ENCODE measurements at regions of chr1 and their contacts with region 1.

Region 1: DNA sequence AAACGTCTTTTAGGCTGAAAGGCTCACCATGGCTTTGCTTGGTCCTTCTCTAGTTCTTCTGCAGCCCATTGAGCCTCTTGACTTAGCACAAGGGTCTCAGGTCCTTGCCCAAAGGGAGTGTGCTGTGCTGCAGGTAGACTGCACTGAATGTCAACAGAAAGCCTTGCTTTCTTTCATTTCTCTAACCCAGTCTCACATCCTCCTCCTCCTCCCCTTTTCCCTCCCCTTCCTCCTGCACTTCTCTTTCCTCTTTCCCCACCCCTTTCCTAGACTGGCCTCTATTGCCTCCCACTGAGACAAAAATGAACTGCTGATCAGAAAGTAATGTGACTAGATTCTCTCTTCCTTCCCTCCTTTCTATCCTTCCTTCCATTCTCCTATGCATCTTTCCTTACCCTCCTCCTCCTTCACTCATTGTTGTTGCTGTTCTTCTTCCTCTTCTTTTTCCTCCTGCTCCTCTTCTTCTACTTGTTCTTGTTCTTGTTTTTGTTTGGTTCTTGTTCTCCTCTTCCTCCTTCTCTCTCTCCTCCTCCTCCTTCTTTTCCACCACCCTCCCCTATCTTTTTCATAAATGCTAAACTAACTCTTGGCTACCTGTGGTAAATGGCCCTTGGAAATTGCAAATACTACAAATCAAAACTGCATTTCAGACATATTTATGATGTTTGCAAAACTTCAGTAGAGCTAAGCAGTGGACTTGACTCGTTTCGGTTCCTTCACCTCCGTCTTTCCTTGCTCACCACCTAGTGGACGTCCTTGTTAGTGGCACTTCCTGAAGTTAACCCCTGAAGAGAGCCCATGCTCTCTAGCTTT is at the start of gene SELL:
- DNase-seq: peak; percentile 21 to 23
- ATAC-seq: peak; percentile 70 to 83
- H3K4me3 ChIP-seq: peak within 1 kb of the TSS in 3 of 4 donors; percentile 22 to 49 (median 30)
- H3K27ac ChIP-seq: no peak within 1 kb of the TSS
- H3K4me1 ChIP-seq: no peaks in the 10 kb centered on the region
- H3K27me3 ChIP-seq: no peaks in the 10 kb centered on the region
- CTCF ChIP-seq: peak; percentile 18 to 68 (median 64)
- POLR2A ChIP-seq: no peak
- total RNA-seq, gene SELL: 0.24 to 0.72 (median 0.55) TPM in 3 of 4 donors, not detected in the other

Region 2: DNA sequence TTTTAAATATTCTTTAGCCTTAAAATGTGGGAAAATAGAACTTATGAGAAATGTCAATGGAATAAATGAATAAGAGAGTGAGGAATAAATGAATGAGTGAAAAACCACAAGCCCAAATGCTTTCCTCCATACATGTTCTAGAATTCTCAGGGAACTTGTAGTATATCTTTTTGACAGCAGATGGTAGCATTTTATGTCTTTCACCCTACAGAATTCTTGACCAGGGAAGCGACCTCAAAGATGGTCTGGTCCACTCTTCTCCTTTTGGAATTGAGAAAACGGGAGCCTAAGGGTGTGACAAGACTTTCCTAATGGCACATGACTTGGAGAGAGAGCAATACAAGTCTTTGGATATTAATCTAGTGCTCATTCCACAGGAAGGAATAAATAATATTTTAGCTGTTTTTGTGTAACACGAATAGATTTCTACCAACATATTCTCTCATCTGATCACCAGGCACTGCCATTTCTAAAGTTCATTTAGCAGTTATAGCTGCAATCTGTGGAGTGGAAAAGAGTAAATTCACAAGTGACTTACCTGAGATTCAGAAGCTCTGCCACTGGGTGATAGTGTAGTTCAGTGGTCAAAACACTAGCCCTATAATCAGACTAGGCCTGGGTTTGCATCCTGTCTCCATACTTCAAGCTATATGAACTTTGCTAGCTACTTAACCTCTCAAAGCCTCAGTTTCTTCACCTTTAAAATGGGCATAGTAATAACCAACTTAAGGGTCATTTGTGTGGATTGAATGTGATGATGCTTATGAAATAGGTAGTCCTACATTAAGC is 110.4 kb before region 1 on chr1:
- in situ Hi-C with region 1: no loop called
- intact Hi-C with region 1: loop called (anchors 5 kb)
- DNase-seq: no peak
- ATAC-seq: no peak
- H3K4me3 ChIP-seq: no peak overlapping the region
- H3K27ac ChIP-seq: no peak overlapping the region
- H3K4me1 ChIP-seq: no peaks in the 10 kb centered on the region
- H3K27me3 ChIP-seq: no peaks in the 10 kb centered on the region
- CTCF ChIP-seq: peak in 1 of 5 experiments; percentile 23
- POLR2A ChIP-seq: no peak

Region 3: GRCh38 chr1:169653873-169654272 is 57.8 kb before region 1 on chr1:
- in situ Hi-C with region 1: no loop called
- intact Hi-C with region 1: no loop called
- DNase-seq: no peak
- ATAC-seq: no peak
- H3K4me3 ChIP-seq: no peak overlapping the region
- H3K27ac ChIP-seq: no peak overlapping the region
- H3K4me1 ChIP-seq: no peaks in the 10 kb centered on the region
- H3K27me3 ChIP-seq: no peaks in the 10 kb centered on the region
- CTCF ChIP-seq: no peak
- POLR2A ChIP-seq: no peak

Measured in gastrocnemius medialis (tissue), 4 donors.